Mammary epithelial cell (primary cell): ENCODE measurements at regions of chr5 and their contacts with region 1.

Region 1: DNA sequence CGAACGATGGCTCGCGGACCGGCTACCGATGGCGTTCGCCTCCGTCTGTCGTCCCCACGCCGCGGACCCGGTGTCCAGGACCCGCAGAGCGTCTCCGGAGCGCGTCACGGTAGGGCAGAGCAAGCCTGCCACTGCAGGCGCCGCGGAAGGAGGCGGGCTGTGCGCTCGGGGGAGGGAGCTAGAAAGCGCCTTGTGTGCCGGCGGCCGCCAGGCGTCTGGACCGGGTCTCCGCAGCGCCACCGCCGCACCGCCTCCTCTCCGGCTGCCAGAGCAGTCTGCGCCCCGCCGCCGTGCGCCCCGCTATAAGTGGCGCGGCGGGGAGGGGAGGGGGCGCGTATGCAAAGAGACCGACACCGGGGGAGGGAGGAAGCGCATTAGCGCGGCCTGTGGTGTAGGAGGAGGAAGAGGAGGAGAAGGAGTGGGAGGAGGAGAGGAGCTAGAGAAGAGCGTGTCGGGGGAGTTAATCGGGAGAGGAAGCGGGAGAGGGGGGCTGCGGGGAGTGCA is at the start of gene ENC1:
- DNase-seq: peak; percentile 88
- H3K4me3 ChIP-seq: peak within 1 kb of the TSS; percentile 66 to 98 (median 93)
- H3K27ac ChIP-seq: peak within 1 kb of the TSS; percentile 91
- H3K4me1 ChIP-seq: peaks cover 60% of the 10 kb centered on the region
- H3K27me3 ChIP-seq: no peaks in the 10 kb centered on the region
- CTCF ChIP-seq: peak; percentile 12 to 59
- total RNA-seq, gene ENC1: 42.4 to 392 TPM

Region 2: DNA sequence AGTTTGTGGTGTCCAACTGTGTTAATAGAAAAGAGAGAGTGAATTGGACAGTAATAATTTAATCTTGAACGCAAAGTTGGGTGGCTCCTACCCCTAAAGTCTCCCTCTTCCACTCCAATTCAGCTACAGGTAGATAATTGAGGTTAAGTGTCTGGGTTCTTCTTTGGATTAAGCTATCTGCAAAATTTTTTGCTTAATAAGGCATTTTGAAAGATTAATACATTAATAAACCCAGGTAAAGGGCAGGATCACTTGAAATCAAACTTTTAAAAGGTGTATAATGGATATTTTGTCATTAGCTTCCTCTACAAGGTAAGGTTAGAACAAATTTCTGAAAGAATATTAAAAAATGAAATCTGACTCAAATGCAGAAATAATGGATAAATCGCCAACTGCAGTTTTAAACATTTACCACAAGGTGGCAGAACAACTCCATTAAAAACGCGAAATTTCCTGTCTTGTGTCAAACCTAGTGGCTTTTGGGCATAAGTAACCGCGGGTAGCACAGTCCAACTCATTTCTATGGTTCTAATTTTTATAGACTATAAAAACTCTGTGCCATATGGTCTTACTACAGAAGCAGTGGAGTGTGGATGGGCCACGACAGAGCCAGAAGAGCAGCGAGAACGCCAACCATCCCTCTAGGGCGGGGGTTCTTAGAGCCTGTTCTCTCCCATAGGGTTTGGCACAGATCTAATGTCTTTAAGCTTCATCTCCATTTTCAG is 738.0 kb before region 1 on chr5:
- CTCF ChIA-PET with region 1: no interaction called
- dilution Hi-C with region 1: no loop called
- in situ Hi-C with region 1: loop called (anchors 5 kb)
- intact Hi-C with region 1: no loop called
- DNase-seq: peak; percentile 48
- H3K4me3 ChIP-seq: no peak overlapping the region
- H3K27ac ChIP-seq: peak overlapping the region; percentile 96
- H3K4me1 ChIP-seq: peaks cover 33% of the 10 kb centered on the region
- H3K27me3 ChIP-seq: no peaks in the 10 kb centered on the region
- CTCF ChIP-seq: peak; percentile 58 to 76

Region 3: DNA sequence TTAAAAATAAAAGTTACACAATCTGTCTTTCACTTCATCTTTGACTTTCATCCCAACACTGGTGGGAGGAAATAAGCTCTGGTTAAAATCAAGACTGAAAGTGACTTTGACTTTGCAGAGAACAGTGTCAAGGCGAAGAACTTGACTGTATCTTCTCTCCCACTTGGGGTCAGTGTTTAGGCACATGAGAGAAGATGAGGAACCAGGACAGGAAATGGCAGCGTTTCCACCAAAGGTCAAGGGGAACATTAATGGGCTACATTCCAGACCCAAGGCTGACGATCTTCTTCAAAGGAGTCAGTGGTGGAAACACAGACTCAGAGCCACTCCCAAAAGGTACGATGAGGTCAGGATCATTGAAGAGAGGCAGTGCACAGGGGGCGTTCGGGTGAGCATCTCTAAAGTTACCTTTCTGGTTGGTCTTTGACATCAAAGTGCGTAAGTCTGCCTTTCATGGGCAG is 605.0 kb before region 1 on chr5:
- CTCF ChIA-PET with region 1: no interaction called
- dilution Hi-C with region 1: no loop called
- in situ Hi-C with region 1: loop called (anchors 10 to 25 kb)
- intact Hi-C with region 1: loop called (anchors 1 kb)
- DNase-seq: peak; percentile 84
- H3K4me3 ChIP-seq: peak overlapping the region in 1 of 3 experiments; percentile 9
- H3K27ac ChIP-seq: peak overlapping the region; percentile 90
- H3K4me1 ChIP-seq: peaks cover 55% of the 10 kb centered on the region
- H3K27me3 ChIP-seq: no peaks in the 10 kb centered on the region
- CTCF ChIP-seq: peak; percentile 58 to 61

Region 4: GRCh38 chr5:74212336-74212735 is 428.2 kb before region 1 on chr5:
- CTCF ChIA-PET with region 1: no interaction called
- dilution Hi-C with region 1: no loop called
- in situ Hi-C with region 1: no loop called
- intact Hi-C with region 1: loop called (anchors 1 kb)
- DNase-seq: no peak
- H3K4me3 ChIP-seq: no peak overlapping the region
- H3K27ac ChIP-seq: no peak overlapping the region
- H3K4me1 ChIP-seq: no peaks in the 10 kb centered on the region
- H3K27me3 ChIP-seq: no peaks in the 10 kb centered on the region
- CTCF ChIP-seq: peak; percentile 38 to 52

Region 5: GRCh38 chr5:74251141-74252035 is 389.1 kb before region 1 on chr5:
- CTCF ChIA-PET with region 1: no interaction called
- dilution Hi-C with region 1: no loop called
- in situ Hi-C with region 1: loop called in 1 of 2 experiments (anchors 25 kb)
- intact Hi-C with region 1: loop called (anchors 1 kb)
- DNase-seq: peak; percentile 98
- H3K4me3 ChIP-seq: no peak overlapping the region
- H3K27ac ChIP-seq: peak overlapping the region; percentile 86
- H3K4me1 ChIP-seq: peaks cover 35% of the 10 kb centered on the region
- H3K27me3 ChIP-seq: no peaks in the 10 kb centered on the region
- CTCF ChIP-seq: no peak

Region 6: DNA sequence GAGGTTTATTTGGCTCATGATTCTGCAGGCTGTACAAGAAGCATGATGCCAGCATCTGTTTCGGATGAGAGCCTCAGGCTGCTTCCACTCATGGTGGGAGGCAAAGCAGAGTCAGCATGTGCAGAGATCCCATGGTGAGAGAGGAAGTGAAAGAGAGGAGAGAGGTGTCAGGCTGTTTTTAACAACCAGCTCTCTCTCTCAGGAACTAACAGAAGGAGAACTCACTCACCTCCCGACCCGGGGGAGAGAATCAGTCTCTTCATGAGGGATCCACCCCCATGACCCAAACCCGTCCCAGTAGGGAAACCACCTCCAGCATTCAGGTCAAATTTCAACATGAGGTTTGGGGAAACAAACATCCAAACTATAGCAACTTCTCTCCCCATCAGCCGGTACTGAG is 187.6 kb before region 1 on chr5:
- CTCF ChIA-PET with region 1: no interaction called
- dilution Hi-C with region 1: no loop called
- in situ Hi-C with region 1: no loop called
- intact Hi-C with region 1: no loop called
- DNase-seq: no peak
- H3K4me3 ChIP-seq: no peak overlapping the region
- H3K27ac ChIP-seq: no peak overlapping the region
- H3K4me1 ChIP-seq: no peaks in the 10 kb centered on the region
- H3K27me3 ChIP-seq: no peaks in the 10 kb centered on the region
- CTCF ChIP-seq: no peak

Region 7: DNA sequence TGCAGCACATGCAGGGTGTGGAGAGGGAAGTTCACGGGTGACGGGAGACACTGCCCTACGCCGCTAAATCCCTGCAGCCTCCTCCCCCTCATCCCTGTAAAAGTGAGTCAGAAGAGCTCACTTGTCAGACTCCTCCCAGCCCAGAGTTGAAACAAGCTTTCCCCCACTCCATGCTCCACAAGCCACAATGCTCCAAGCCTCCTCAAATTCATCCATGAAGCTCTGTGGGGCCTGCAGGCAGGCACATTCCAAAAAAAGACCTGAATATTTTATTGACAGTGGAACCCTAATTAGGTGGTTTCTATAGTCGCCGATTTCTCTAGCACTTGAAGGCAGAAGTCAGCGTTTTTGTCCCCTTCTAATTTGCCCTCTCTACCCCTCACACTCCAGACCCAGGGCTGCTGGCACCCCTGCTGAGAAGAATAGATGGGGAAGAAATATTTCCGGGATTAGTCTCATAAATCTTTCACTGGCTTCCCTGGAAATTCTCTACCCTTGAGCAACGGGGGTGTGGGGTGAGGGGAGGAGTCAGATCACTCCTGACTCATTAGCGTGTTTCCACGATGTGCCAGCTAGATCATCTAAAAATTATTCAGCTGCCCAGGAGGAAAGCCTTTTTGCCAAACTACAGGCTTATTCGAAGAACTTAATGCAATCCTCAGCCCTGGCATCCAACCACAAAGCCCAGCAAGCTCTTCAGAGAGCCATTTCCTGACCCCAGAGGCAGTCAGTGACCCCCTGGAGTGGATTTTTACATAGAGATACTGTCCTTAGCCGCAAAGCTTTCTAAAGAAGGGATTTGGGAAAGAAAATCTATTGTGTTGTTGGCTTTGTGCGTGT is 97.1 kb before region 1 on chr5:
- CTCF ChIA-PET with region 1: interaction called, 5 read pairs
- dilution Hi-C with region 1: no loop called
- in situ Hi-C with region 1: no loop called
- intact Hi-C with region 1: loop called (anchors 1 kb)
- DNase-seq: peak; percentile 91
- H3K4me3 ChIP-seq: peak overlapping the region in 1 of 3 experiments; percentile 16
- H3K27ac ChIP-seq: peak overlapping the region; percentile 92
- H3K4me1 ChIP-seq: peaks cover 46% of the 10 kb centered on the region
- H3K27me3 ChIP-seq: no peaks in the 10 kb centered on the region
- CTCF ChIP-seq: no peak

Region 8: GRCh38 chr5:75690669-75691068 is 1050.2 kb after region 1 on chr5:
- CTCF ChIA-PET with region 1: no interaction called
- dilution Hi-C with region 1: no loop called
- in situ Hi-C with region 1: no loop called
- intact Hi-C with region 1: no loop called
- DNase-seq: no peak
- H3K4me3 ChIP-seq: no peak overlapping the region
- H3K27ac ChIP-seq: no peak overlapping the region
- H3K4me1 ChIP-seq: no peaks in the 10 kb centered on the region
- H3K27me3 ChIP-seq: no peaks in the 10 kb centered on the region
- CTCF ChIP-seq: no peak